Ascending aorta (tissue), 2 donors: ENCODE measurements at regions of chr2 and their contacts with region 1.

Region 1: GRCh38 chr2:212536817-212537725 is 1.5 kb downstream of the ERBB4 start:
- DNase-seq: peak; percentile 10 to 68
- H3K4me3 ChIP-seq: peak overlapping the region; percentile 79 to 80
- H3K27ac ChIP-seq: peak overlapping the region; percentile 61 to 86
- H3K4me1 ChIP-seq: peaks cover 0 to 3% of the 10 kb centered on the region in 2 donors
- H3K27me3 ChIP-seq: no peaks in the 10 kb centered on the region
- CTCF ChIP-seq: no peak

Region 2: GRCh38 chr2:212032032-212032431 is 505.0 kb before region 1 on chr2:
- intact Hi-C with region 1: loop called (anchors 2 kb)
- DNase-seq: no peak
- H3K4me3 ChIP-seq: peak overlapping the region in 1 of 2 donors; percentile 13
- H3K27ac ChIP-seq: peak overlapping the region; percentile 69 to 77
- H3K4me1 ChIP-seq: peaks cover 0 to 18% of the 10 kb centered on the region in 2 donors
- H3K27me3 ChIP-seq: no peaks in the 10 kb centered on the region
- CTCF ChIP-seq: no peak

Region 3: GRCh38 chr2:212147921-212148513 is 389.1 kb before region 1 on chr2:
- intact Hi-C with region 1: loop called (anchors 5 kb)
- DNase-seq: no peak
- H3K4me3 ChIP-seq: no peak overlapping the region
- H3K27ac ChIP-seq: no peak overlapping the region
- H3K4me1 ChIP-seq: peaks cover 5 to 7% of the 10 kb centered on the region in 2 donors
- H3K27me3 ChIP-seq: no peaks in the 10 kb centered on the region
- CTCF ChIP-seq: peak; percentile 23 to 55 (median 36)

Region 4: GRCh38 chr2:212346865-212347264 is 190.2 kb before region 1 on chr2:
- intact Hi-C with region 1: loop called (anchors 5 kb)
- DNase-seq: no peak
- H3K4me3 ChIP-seq: no peak overlapping the region
- H3K27ac ChIP-seq: peak overlapping the region; percentile 32 to 74
- H3K4me1 ChIP-seq: peaks cover 2 to 8% of the 10 kb centered on the region in 2 donors
- H3K27me3 ChIP-seq: no peaks in the 10 kb centered on the region
- CTCF ChIP-seq: no peak

Region 5: GRCh38 chr2:212359425-212360067 is 177.5 kb before region 1 on chr2:
- intact Hi-C with region 1: no loop called
- DNase-seq: no peak
- H3K4me3 ChIP-seq: no peak overlapping the region
- H3K27ac ChIP-seq: peak overlapping the region; percentile 18 to 57
- H3K4me1 ChIP-seq: peaks cover 5 to 8% of the 10 kb centered on the region in 2 donors
- H3K27me3 ChIP-seq: no peaks in the 10 kb centered on the region
- CTCF ChIP-seq: no peak

Region 6: GRCh38 chr2:212520340-212520739 is 16.7 kb before region 1 on chr2:
- intact Hi-C with region 1: no loop called
- DNase-seq: no peak
- H3K4me3 ChIP-seq: no peak overlapping the region
- H3K27ac ChIP-seq: no peak overlapping the region
- H3K4me1 ChIP-seq: no peaks in the 10 kb centered on the region
- H3K27me3 ChIP-seq: no peaks in the 10 kb centered on the region
- CTCF ChIP-seq: peak in 1 of 3 experiments; percentile 54